Breast epithelium (tissue), 4 donors: ENCODE measurements at regions of chr4 and their contacts with region 1.

Region 1: DNA sequence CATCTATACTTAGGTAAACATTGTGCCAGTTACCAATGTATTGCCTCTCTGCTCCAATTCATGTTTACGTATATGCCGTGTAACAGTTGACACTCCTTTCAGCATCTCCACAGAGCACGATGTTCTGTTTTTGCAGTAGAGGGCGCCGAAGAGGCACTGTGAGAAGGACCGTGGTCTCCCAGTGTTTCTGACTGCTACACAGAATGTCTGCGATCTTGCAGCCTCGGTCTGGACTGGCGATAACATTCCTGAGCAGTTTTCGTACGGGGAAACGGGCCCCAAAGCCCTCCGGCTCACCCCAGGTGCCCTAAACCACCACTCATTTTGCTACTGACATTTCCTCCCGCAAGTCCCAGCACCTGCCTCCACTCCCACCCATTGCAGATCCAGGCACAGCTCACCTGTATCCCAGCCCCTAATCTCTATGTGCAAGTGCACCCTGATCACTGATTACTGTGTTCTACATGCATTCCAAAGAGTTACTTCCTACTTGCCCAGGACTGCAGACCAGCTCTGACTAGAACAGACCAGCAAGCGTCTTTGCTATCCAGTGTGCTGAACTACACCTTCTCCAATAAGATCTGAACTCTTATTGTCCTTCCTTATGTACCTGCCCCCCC is 12.4 kb upstream of the NFXL1 start:
- DNase-seq: no peak
- H3K4me3 ChIP-seq: peak overlapping the region in 2 of 3 donors; percentile 21 to 54
- H3K27ac ChIP-seq: no peak overlapping the region
- H3K4me1 ChIP-seq: no peaks in the 10 kb centered on the region
- H3K27me3 ChIP-seq: no peaks in the 10 kb centered on the region
- CTCF ChIP-seq: peak in 2 of 3 donors; percentile 25 to 34
- POLR2A ChIP-seq: no peak

Region 2: GRCh38 chr4:47686294-47686872 is 240.4 kb before region 1 on chr4:
- intact Hi-C with region 1: loop called (anchors 10 kb)
- DNase-seq: peak; percentile 20 to 55
- H3K4me3 ChIP-seq: no peak overlapping the region
- H3K27ac ChIP-seq: no peak overlapping the region
- H3K4me1 ChIP-seq: no peaks in the 10 kb centered on the region
- H3K27me3 ChIP-seq: no peaks in the 10 kb centered on the region
- CTCF ChIP-seq: peak in 2 of 3 donors; percentile 47 to 50
- POLR2A ChIP-seq: no peak